ENCODE measurements at regions of chr11 and their contacts with region 1.

Region 1: GRCh38 chr11:36672813-36673450 is 74.9 kb upstream of the RAG2 start:
- DNase-seq: peak in 1 of 3 donors; percentile 65
- ATAC-seq: no peak
- H3K4me3 ChIP-seq: no peak overlapping the region
- H3K4me1 ChIP-seq: no peaks in the 10 kb centered on the region
- CTCF ChIP-seq: peak; percentile 43

Region 2: DNA sequence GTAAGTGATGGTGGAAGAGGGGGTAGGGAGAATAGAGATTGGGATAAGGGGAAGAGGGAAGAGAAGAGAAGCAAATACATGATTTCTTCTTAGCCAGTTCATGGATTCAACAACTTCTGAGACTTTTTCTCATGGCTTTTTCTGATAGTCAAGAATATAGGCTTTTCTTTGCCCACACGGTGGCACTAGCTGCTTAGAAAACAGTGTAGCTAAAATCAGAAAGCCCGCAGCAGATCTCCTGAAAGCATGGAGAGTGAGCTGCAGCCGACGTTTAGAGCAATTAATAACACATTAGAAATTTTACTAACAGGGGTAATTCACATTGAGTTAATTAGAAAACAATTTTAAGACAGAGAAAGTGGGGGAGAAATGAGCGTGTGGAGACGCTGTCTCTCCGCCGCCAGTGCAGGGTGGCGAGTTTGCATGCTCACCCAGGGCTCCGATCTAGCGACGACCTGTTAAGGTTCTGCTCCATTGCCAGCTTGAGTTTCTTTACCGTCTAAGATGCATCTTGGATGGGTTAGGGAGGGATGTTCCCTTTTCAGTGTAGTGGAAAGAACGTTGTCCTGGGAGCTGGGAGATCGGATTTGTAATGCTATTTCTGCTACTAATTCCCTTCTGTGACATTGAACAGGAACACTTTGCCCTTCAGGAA is 108.4 kb before region 1 on chr11:
- intact Hi-C with region 1: loop called (anchors 5 kb)
- DNase-seq: peak in 2 of 3 donors; percentile 26 to 73
- ATAC-seq: peak; percentile 70
- H3K4me3 ChIP-seq: no peak overlapping the region
- H3K4me1 ChIP-seq: no peaks in the 10 kb centered on the region
- CTCF ChIP-seq: no peak